Activated B cell treated with CpG ODN at 0.5 μM for 24 hours (primary cell): ENCODE measurements at regions of chr4 and their contacts with region 1.

Region 1: DNA sequence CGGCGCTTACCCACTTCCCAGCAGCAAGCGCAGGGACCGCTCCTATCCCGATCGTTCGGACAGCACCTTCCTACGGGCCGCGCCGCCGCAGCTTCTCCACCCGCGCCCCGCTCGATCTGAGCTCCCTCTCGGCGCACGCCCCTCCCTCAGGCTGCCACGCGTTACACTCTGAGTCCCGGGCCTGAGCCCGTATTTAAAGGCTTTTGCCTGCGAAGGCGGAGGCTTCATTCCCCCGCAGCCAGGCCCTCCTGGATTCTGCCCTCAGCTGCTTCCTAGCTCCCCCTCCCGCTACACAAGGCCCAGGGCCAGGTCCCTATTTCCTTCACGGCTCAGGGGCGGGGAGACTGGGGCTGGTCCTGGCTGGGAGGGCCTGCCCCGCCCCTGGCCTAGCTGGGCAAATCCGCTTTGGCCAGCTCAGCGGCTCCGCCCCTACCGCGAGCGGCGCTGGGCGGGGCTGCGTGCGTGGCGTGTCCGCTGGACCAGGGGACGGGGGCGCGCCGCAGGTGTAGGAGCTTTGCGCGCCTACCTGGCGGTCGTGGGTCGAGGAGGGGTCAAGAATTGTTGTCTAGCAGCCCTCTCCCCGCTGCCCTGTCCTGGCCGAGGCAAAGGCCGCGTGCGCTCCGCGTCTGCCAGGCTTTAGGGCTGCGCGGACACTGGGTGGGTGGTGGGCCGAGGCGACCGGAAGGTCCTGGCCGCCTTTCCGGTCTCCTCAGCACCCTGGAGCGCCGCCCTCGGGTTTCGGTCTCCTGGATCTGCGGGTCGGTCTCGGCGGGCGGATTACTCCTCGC is at the start of gene UGDH:
- DNase-seq: peak; percentile 94
- ATAC-seq: peak; percentile 99
- H3K4me3 Mint-ChIP-seq: peak within 1 kb of the TSS; percentile 98
- H3K27ac Mint-ChIP-seq: peak within 1 kb of the TSS; percentile 93
- H3K4me1 Mint-ChIP-seq: peaks cover 20% of the 10 kb centered on the region
- H3K27me3 Mint-ChIP-seq: no peaks in the 10 kb centered on the region
- CTCF ChIP-seq: no peak
- total RNA-seq, gene UGDH: 40.6 and 43.3 TPM in 2 replicates

Region 2: GRCh38 chr4:39458505-39459300 is 68.8 kb before region 1 on chr4 and contains the starts of genes LIAS and RPL9:
- CTCF ChIA-PET with region 1: no interaction called
- POLR2A ChIA-PET with region 1: interaction called, 13 read pairs
- intact Hi-C with region 1: loop called (anchors 2 kb)
- DNase-seq: peak; percentile 90
- ATAC-seq: peak; percentile 81
- H3K4me3 Mint-ChIP-seq: peak within 1 kb of the TSS; percentile 97
- H3K27ac Mint-ChIP-seq: peak within 1 kb of the TSS; percentile 98
- H3K4me1 Mint-ChIP-seq: peaks cover 36% of the 10 kb centered on the region
- H3K27me3 Mint-ChIP-seq: no peaks in the 10 kb centered on the region
- CTCF ChIP-seq: no peak
- total RNA-seq, gene LIAS: 19.5 and 20.5 TPM in 2 replicates
- total RNA-seq, gene RPL9: 2,632 and 2,865 TPM in 2 replicates

Region 3: GRCh38 chr4:39505581-39505980 is 21.9 kb before region 1 on chr4:
- CTCF ChIA-PET with region 1: no interaction called
- POLR2A ChIA-PET with region 1: no interaction called
- intact Hi-C with region 1: no loop called
- DNase-seq: no peak
- ATAC-seq: no peak
- H3K4me3 Mint-ChIP-seq: no peak overlapping the region
- H3K27ac Mint-ChIP-seq: no peak overlapping the region
- H3K4me1 Mint-ChIP-seq: no peaks in the 10 kb centered on the region
- H3K27me3 Mint-ChIP-seq: no peaks in the 10 kb centered on the region
- CTCF ChIP-seq: no peak

Region 4: DNA sequence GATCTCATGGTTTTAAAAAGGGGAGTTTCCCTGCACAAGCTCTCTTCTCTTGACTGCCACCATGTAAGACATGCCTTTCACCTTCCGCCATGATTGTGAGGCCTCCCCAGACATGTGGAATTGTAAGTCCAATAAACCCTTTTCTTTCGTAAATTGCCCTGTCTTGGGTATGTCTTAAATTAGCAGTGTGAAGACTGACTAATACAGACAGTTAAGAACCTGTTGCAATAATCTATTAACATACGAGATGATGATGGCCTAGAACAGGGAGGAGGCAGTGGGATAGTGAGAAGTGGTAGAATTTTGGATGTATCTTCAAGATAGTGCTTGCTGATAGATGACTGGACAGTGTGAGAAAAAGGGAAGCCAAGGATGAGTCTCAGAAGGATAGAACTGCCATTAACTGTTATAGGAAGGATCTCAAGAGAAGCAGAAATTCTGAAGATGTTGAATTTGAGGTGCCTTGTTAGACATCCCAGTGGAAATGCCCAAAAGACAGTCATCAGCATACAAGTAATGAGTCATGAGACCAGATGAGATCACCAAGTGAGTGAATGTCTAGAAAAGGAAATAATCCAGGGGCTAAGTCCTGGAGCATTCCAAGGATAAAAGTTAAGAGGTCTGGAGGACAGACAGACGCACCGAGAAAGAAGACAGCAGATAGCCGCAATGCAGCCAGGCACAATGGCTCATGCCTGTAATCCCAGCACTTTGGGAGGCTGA is 38.6 kb after region 1 on chr4:
- CTCF ChIA-PET with region 1: no interaction called
- POLR2A ChIA-PET with region 1: interaction called, 11 read pairs
- intact Hi-C with region 1: loop called (anchors 1 kb)
- DNase-seq: no peak
- ATAC-seq: no peak
- H3K4me3 Mint-ChIP-seq: no peak overlapping the region
- H3K27ac Mint-ChIP-seq: peak overlapping the region; percentile 20
- H3K4me1 Mint-ChIP-seq: peaks cover 34% of the 10 kb centered on the region
- H3K27me3 Mint-ChIP-seq: no peaks in the 10 kb centered on the region
- CTCF ChIP-seq: no peak

Region 5: DNA sequence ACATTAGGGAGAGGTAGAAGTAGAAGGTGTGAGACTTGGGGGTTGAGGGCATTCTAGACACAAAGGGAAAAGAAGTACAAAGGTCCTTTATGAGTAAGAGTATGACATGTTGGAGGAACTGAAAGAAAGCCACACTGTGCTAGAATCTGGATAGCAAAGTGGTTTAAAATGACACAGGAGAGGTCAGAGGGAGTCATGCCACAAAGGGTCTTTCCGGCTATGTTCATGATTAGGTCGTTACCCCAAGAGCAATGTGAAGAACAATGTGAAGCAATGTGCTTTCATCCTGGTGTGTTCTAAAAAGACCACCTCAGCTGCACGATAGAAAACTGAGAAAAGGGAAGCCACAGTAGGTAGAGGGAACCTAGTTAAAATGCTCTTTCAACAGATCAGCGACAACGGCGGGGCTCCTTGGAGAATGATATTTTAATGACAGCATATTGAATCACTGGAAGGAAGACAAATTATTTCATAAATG is 82.0 kb after region 1 on chr4:
- CTCF ChIA-PET with region 1: no interaction called
- POLR2A ChIA-PET with region 1: interaction called, 14 read pairs
- intact Hi-C with region 1: loop called (anchors 1 kb)
- DNase-seq: no peak
- ATAC-seq: peak; percentile 84
- H3K4me3 Mint-ChIP-seq: peak overlapping the region; percentile 75
- H3K27ac Mint-ChIP-seq: peak overlapping the region; percentile 88
- H3K4me1 Mint-ChIP-seq: peaks cover 67% of the 10 kb centered on the region
- H3K27me3 Mint-ChIP-seq: no peaks in the 10 kb centered on the region
- CTCF ChIP-seq: no peak

Region 6: GRCh38 chr4:39621582-39621981 is 94.1 kb after region 1 on chr4:
- CTCF ChIA-PET with region 1: interaction called, 3 read pairs
- POLR2A ChIA-PET with region 1: interaction called, 32 read pairs
- intact Hi-C with region 1: loop called (anchors 1 kb)
- DNase-seq: no peak
- ATAC-seq: no peak
- H3K4me3 Mint-ChIP-seq: peak overlapping the region; percentile 9
- H3K27ac Mint-ChIP-seq: no peak overlapping the region
- H3K4me1 Mint-ChIP-seq: peaks cover 69% of the 10 kb centered on the region
- H3K27me3 Mint-ChIP-seq: no peaks in the 10 kb centered on the region
- CTCF ChIP-seq: no peak

Region 7: GRCh38 chr4:39631700-39632079 is 104.2 kb after region 1 on chr4:
- CTCF ChIA-PET with region 1: interaction called, 5 read pairs
- POLR2A ChIA-PET with region 1: interaction called, 113 read pairs
- intact Hi-C with region 1: loop called (anchors 1 kb)
- DNase-seq: no peak
- ATAC-seq: peak; percentile 70
- H3K4me3 Mint-ChIP-seq: peak overlapping the region; percentile 44
- H3K27ac Mint-ChIP-seq: peak overlapping the region; percentile 96
- H3K4me1 Mint-ChIP-seq: peaks cover 86% of the 10 kb centered on the region
- H3K27me3 Mint-ChIP-seq: no peaks in the 10 kb centered on the region
- CTCF ChIP-seq: no peak

Region 8: DNA sequence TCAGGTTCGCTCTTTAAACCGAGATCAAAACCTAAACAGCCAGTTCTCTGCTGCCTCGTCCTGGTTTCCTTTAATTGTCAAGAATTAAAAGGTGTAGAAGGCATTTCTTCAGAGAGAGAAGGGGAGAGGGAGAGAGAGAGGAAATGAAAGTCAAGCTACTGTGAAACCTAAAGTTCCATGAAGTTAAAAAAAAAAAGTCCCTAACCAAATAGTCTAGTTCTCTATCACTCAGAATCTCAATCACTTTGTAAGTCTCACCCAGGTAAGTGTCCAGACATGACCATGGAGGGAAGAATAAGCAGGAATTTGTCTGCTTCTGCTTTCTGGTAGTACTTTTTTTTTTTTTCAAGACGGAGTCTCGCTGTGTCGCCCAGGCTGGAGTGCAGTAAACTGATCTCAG is 130.0 kb after region 1 on chr4:
- CTCF ChIA-PET with region 1: no interaction called
- POLR2A ChIA-PET with region 1: interaction called, 12 read pairs
- intact Hi-C with region 1: loop called (anchors 1 kb)
- DNase-seq: no peak
- ATAC-seq: peak; percentile 91
- H3K4me3 Mint-ChIP-seq: peak overlapping the region; percentile 71
- H3K27ac Mint-ChIP-seq: peak overlapping the region; percentile 81
- H3K4me1 Mint-ChIP-seq: peaks cover 35% of the 10 kb centered on the region
- H3K27me3 Mint-ChIP-seq: no peaks in the 10 kb centered on the region
- CTCF ChIP-seq: no peak

Region 9: DNA sequence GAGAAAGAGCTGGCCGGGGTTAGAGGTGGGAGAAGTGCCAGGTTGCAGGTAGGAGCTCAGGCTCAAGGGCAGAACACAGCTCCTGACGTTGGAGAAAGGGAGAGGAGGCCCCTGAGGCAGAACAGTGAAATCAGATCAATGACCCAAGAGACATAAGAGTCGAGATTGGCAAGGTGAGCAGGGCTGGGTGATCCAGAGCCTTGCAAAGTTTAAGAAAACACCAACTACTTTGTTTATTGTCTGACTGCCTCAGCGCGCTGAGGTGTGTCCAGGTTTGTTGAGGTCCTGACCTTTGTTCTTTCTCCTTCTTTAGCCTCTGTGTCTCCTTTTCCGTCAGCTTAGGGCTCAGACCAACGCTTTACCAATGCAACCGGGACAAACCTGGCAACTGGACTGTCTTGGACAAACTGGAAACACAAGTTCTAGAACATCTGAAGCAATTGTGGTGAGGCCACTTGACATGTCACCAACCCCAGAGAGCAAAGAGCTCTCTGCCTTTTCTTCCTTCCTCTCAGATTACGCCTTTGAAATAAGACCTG is 836.0 kb after region 1 on chr4:
- CTCF ChIA-PET with region 1: no interaction called
- POLR2A ChIA-PET with region 1: no interaction called
- intact Hi-C with region 1: no loop called
- DNase-seq: no peak
- ATAC-seq: no peak
- H3K4me3 Mint-ChIP-seq: no peak overlapping the region
- H3K27ac Mint-ChIP-seq: no peak overlapping the region
- H3K4me1 Mint-ChIP-seq: peaks cover 7% of the 10 kb centered on the region
- H3K27me3 Mint-ChIP-seq: no peaks in the 10 kb centered on the region
- CTCF ChIP-seq: no peak